ENCODE measurements at regions of chr2 and their contacts with region 1.

Region 1: GRCh38 chr2:202588647-202589581 is 45.9 kb upstream of the FAM117B start:
- DNase-seq: peak; percentile 32 to 82 (median 77)
- ATAC-seq: peak; percentile 96
- H3K4me3 ChIP-seq: no peak overlapping the region
- H3K4me3 Mint-ChIP-seq: peak overlapping the region in 9 of 10 donors; percentile 3 to 76 (median 42)
- H3K27ac ChIP-seq: no peak overlapping the region
- H3K27ac Mint-ChIP-seq: peak overlapping the region in 5 of 9 donors; percentile 7 to 78 (median 64)
- H3K4me1 ChIP-seq: peaks cover 0 to 4% of the 10 kb centered on the region in 2 donors
- H3K4me1 Mint-ChIP-seq: peaks cover 5 to 15% (median 11%) of the 10 kb centered on the region in 7 donors
- H3K27me3 ChIP-seq: no peaks in the 10 kb centered on the region
- H3K27me3 Mint-ChIP-seq: no peaks in the 10 kb centered on the region

Region 2: GRCh38 chr2:201754717-201755415 is 834.0 kb before region 1 on chr2:
- CTCF ChIA-PET with region 1: no interaction called
- POLR2A ChIA-PET with region 1: no interaction called
- intact Hi-C with region 1: no loop called
- DNase-seq: no peak
- ATAC-seq: no peak
- H3K4me3 ChIP-seq: no peak overlapping the region
- H3K4me3 Mint-ChIP-seq: no peak overlapping the region
- H3K27ac ChIP-seq: no peak overlapping the region
- H3K27ac Mint-ChIP-seq: no peak overlapping the region
- H3K4me1 ChIP-seq: no peaks in the 10 kb centered on the region
- H3K4me1 Mint-ChIP-seq: no peaks in the 10 kb centered on the region
- H3K27me3 ChIP-seq: no peaks in the 10 kb centered on the region
- H3K27me3 Mint-ChIP-seq: no peaks in the 10 kb centered on the region

Region 3: GRCh38 chr2:202627042-202627441 is 38.1 kb after region 1 on chr2:
- CTCF ChIA-PET with region 1: interaction called, 10 read pairs
- POLR2A ChIA-PET with region 1: interaction called, 5 read pairs
- intact Hi-C with region 1: no loop called
- DNase-seq: no peak
- ATAC-seq: no peak
- H3K4me3 ChIP-seq: no peak overlapping the region
- H3K4me3 Mint-ChIP-seq: peak overlapping the region in 1 of 10 donors; percentile 14
- H3K27ac ChIP-seq: peak overlapping the region; percentile 2
- H3K27ac Mint-ChIP-seq: no peak overlapping the region
- H3K4me1 ChIP-seq: peaks cover 0 to 16% of the 10 kb centered on the region in 2 donors
- H3K4me1 Mint-ChIP-seq: peaks cover 0 to 21% (median 12%) of the 10 kb centered on the region in 7 donors
- H3K27me3 ChIP-seq: no peaks in the 10 kb centered on the region
- H3K27me3 Mint-ChIP-seq: no peaks in the 10 kb centered on the region

Region 4: GRCh38 chr2:202690321-202690900 is 101.5 kb after region 1 on chr2:
- CTCF ChIA-PET with region 1: interaction called, 4 read pairs
- POLR2A ChIA-PET with region 1: no interaction called
- intact Hi-C with region 1: loop called in 1 of 2 experiments (anchors 2 kb)
- DNase-seq: no peak
- ATAC-seq: no peak
- H3K4me3 ChIP-seq: no peak overlapping the region
- H3K4me3 Mint-ChIP-seq: peak overlapping the region in 9 of 10 donors; percentile 18 to 65 (median 47)
- H3K27ac ChIP-seq: no peak overlapping the region
- H3K27ac Mint-ChIP-seq: peak overlapping the region in 8 of 9 donors; percentile 38 to 89 (median 64)
- H3K4me1 ChIP-seq: peaks cover 0 to 10% of the 10 kb centered on the region in 2 donors
- H3K4me1 Mint-ChIP-seq: peaks cover 13 to 94% (median 88%) of the 10 kb centered on the region in 7 donors
- H3K27me3 ChIP-seq: no peaks in the 10 kb centered on the region
- H3K27me3 Mint-ChIP-seq: no peaks in the 10 kb centered on the region

Region 5: GRCh38 chr2:202718614-202719013 is 129.7 kb after region 1 on chr2:
- CTCF ChIA-PET with region 1: interaction called, 8 read pairs
- POLR2A ChIA-PET with region 1: no interaction called
- intact Hi-C with region 1: loop called in 1 of 2 experiments (anchors 2 kb)
- DNase-seq: no peak
- ATAC-seq: no peak
- H3K4me3 ChIP-seq: no peak overlapping the region
- H3K4me3 Mint-ChIP-seq: peak overlapping the region in 6 of 10 donors; percentile 2 to 39 (median 36)
- H3K27ac ChIP-seq: no peak overlapping the region
- H3K27ac Mint-ChIP-seq: peak overlapping the region in 6 of 9 donors; percentile 2 to 72 (median 24)
- H3K4me1 ChIP-seq: peaks cover 0 to 16% of the 10 kb centered on the region in 2 donors
- H3K4me1 Mint-ChIP-seq: peaks cover 0 to 74% (median 63%) of the 10 kb centered on the region in 7 donors
- H3K27me3 ChIP-seq: no peaks in the 10 kb centered on the region
- H3K27me3 Mint-ChIP-seq: no peaks in the 10 kb centered on the region

Region 6: DNA sequence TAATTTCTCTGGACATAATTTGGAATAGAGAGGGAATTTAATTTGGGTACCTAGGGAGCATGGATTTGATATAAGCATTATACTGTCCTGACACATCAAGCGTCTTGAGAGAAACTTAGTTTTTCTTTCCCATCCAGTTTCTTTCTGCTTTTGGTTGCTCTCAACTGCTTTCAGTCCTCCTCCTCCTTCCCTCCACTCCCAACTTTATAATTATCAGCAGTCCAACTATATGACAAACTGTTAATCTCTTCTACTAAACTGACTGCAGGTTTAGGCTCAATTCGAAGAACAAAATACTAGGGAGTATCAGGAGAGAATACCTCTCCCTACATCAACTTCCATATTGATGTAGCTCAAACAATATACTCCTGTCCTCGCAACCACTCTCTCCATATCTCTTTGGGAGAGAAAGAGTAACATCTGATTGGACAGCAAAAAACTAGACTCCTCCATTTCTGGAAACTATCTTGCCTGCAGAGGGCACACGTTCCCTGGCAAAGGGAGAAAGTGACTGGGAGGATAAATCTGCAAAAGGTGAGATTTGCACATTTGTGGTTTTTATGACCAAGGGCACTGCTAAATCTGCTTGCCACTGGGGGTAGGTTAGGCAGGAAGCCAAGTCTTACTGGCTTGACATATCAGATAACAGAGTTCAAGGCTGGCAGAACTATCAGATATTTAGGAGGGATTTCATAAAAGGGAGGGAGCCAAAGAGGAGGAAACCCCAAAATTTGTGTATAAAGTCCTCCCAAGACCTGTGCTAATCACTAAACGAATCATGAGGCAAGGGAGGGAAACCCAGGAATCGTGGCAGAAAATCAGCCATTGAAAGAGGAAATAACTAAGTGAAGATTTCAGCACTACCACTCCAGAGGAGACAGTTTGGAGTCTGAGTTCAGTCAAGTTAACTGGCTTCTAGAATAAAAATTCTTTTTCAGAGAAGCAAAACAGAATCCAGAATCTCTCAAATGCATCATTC is 242.6 kb after region 1 on chr2:
- CTCF ChIA-PET with region 1: interaction called, 3 read pairs
- POLR2A ChIA-PET with region 1: no interaction called
- intact Hi-C with region 1: loop called in 1 of 2 experiments (anchors 2 kb)
- DNase-seq: peak in 8 of 9 donors; percentile 10 to 56 (median 46)
- ATAC-seq: peak; percentile 80
- H3K4me3 ChIP-seq: no peak overlapping the region
- H3K4me3 Mint-ChIP-seq: peak overlapping the region in 8 of 10 donors; percentile 11 to 71 (median 38)
- H3K27ac ChIP-seq: no peak overlapping the region
- H3K27ac Mint-ChIP-seq: peak overlapping the region in 4 of 9 donors; percentile 14 to 75 (median 63)
- H3K4me1 ChIP-seq: peaks cover 0 to 9% of the 10 kb centered on the region in 2 donors
- H3K4me1 Mint-ChIP-seq: peaks cover 6 to 17% (median 10%) of the 10 kb centered on the region in 7 donors
- H3K27me3 ChIP-seq: no peaks in the 10 kb centered on the region
- H3K27me3 Mint-ChIP-seq: no peaks in the 10 kb centered on the region

Region 7: GRCh38 chr2:202911512-202912341 is 322.8 kb after region 1 on chr2 and contains the starts of genes CARF and WDR12:
- CTCF ChIA-PET with region 1: interaction called, 3 read pairs
- POLR2A ChIA-PET with region 1: no interaction called
- intact Hi-C with region 1: loop called in 1 of 2 experiments (anchors 1 kb)
- DNase-seq: peak; percentile 81 to 93 (median 89)
- ATAC-seq: peak; percentile 93
- H3K4me3 ChIP-seq: peak within 1 kb of the TSS; percentile 82
- H3K4me3 Mint-ChIP-seq: peak within 1 kb of the TSS; percentile 90 to 100 (median 98)
- H3K27ac ChIP-seq: peak within 1 kb of the TSS; percentile 79
- H3K27ac Mint-ChIP-seq: peak within 1 kb of the TSS; percentile 93 to 99 (median 97)
- H3K4me1 ChIP-seq: peaks cover 4 to 11% of the 10 kb centered on the region in 2 donors
- H3K4me1 Mint-ChIP-seq: peaks cover 24 to 50% (median 34%) of the 10 kb centered on the region in 7 donors
- H3K27me3 ChIP-seq: no peaks in the 10 kb centered on the region
- H3K27me3 Mint-ChIP-seq: no peaks in the 10 kb centered on the region
- total RNA-seq, gene CARF: 10.2 to 31.2 (median 15.4) TPM
- total RNA-seq, gene WDR12: 17.2 to 50.4 (median 20.8) TPM